Activated CD4-positive, alpha-beta T cell treated with anti-CD3 and anti-CD28 coated beads for 36 hours (primary cell): ENCODE measurements at regions of chr18 and their contacts with region 1.

Region 1: DNA sequence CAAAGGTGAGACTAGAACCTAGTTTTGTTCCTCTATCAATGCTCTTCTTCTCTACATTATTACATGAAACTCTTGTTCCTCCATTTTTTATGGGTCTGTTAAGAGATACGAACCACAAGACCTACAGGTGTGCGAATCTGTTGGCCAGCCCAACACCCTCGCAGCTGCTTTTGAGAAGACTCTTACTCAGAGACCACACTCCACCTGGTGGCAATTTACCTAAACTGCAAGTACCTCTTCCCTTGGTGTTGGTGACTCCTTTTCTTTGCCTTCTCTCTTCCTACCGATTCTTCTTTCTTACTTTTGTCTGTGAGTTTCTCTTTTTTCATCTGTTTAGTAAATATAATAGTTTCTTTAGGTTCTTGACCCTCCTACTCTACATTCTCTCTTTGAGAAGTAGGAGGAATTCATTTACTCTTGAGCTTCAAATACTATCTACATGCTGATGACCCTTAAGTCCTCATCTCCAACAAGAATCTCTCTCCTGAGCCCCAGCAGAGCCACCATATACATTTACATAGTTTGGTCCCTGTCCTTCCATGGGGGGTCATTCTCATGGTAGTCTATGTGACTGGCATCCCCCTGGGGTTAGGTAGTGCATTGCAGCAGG is 81.8 kb upstream of the GAREM1 start:
- DNase-seq: peak; percentile 71
- ATAC-seq: peak; percentile 68
- H3K4me3 Mint-ChIP-seq: no peak overlapping the region
- H3K27ac Mint-ChIP-seq: no peak overlapping the region
- H3K4me1 Mint-ChIP-seq: no peaks in the 10 kb centered on the region
- H3K27me3 Mint-ChIP-seq: peaks cover 16% of the 10 kb centered on the region

Region 2: DNA sequence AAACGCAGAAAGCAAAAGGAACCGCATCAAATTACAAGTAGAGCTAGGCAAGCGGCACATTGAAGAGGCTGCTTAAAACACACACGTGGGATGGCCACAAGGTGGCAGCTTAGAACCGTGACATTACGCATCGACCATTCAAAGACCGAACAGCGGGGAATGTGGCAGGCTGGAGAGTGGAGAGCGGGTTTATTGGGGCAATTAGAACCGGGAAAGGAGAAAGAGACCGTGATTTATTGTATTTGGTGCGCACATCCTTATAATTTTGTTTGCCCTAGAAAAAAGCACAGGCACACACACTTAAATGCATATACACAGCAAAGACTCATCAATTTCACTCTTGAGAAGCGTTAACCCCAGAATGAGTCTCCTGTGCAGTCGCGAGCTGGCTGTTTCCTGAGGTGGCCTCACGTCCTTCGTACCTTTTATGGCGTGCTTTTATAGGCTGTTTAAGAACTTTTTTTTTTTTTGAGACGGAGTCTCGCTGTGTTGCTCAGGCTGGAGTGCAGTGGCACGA is 394.4 kb before region 1 on chr18:
- CTCF ChIA-PET with region 1: interaction called, 98 read pairs
- POLR2A ChIA-PET with region 1: no interaction called
- intact Hi-C with region 1: loop called (anchors 1 kb)
- DNase-seq: peak; percentile 82
- ATAC-seq: peak; percentile 92
- H3K4me3 Mint-ChIP-seq: peak overlapping the region; percentile 54
- H3K27ac Mint-ChIP-seq: no peak overlapping the region
- H3K4me1 Mint-ChIP-seq: peaks cover 4% of the 10 kb centered on the region
- H3K27me3 Mint-ChIP-seq: peaks cover 7% of the 10 kb centered on the region

Region 3: DNA sequence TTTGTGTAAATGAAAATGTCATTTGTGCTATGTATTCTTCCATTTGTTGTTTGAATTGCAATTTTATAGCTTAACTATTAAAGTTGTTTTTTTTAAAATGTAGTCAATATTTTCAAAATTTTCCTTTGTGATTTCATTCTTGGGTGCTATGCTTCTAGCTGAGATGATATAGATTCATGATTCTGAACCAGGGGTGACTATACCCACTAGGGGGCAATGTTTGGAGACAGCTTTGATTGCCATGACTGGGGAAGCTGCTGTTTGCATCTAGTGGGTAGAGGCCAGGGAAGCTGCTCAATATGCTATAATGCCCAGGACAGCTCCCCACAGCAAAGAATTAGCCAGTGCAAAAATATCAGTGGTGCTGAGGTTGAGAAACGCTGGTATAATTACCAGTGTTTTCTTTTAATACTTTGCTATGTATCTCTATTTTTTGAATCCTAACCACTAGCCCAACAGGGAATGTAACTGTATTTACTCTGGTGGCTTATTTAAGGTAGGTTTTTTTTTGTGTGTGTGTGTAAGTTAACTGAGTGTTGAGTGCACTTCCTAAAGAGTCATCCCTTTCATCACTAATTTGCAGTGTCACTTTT is 262.9 kb before region 1 on chr18:
- CTCF ChIA-PET with region 1: interaction called, 18 read pairs
- POLR2A ChIA-PET with region 1: no interaction called
- intact Hi-C with region 1: loop called (anchors 1 to 5 kb)
- DNase-seq: peak; percentile 56
- ATAC-seq: peak; percentile 58
- H3K4me3 Mint-ChIP-seq: no peak overlapping the region
- H3K27ac Mint-ChIP-seq: no peak overlapping the region
- H3K4me1 Mint-ChIP-seq: no peaks in the 10 kb centered on the region
- H3K27me3 Mint-ChIP-seq: peaks cover 11% of the 10 kb centered on the region

Region 4: GRCh38 chr18:32439802-32440201 is 112.7 kb before region 1 on chr18:
- CTCF ChIA-PET with region 1: interaction called, 5 read pairs
- POLR2A ChIA-PET with region 1: no interaction called
- intact Hi-C with region 1: loop called in 1 of 2 experiments (anchors 1 kb)
- DNase-seq: peak; percentile 18
- ATAC-seq: no peak
- H3K4me3 Mint-ChIP-seq: no peak overlapping the region
- H3K27ac Mint-ChIP-seq: no peak overlapping the region
- H3K4me1 Mint-ChIP-seq: no peaks in the 10 kb centered on the region
- H3K27me3 Mint-ChIP-seq: peaks cover 7% of the 10 kb centered on the region

Region 5: DNA sequence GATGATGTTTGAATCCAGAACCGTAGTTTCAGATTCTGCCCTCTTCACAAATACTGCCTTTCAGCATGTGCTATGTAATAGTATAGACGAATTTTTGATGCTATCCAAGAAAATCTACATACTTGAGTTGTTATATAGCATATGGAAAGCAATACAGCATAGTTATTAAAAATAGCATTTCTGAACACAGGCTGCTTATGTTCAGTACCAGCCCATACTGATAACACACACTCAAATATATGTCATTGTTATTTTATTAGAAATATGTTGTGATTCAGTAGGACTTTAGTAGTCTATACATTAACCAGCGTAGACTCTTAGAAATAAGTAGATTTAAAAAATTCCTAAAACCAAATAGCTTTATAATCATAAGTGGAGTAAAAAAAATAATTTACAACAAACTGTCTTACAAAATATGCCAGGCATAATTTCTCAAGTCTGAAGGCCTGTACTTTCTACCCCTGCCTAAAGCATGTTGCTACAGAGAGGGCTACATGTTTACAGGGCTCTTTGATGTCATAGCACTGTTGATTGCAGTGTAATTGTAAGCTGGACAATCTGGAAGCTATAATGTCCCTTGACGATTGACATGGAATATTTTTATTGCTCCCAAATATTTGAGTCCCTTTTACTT is 1111.8 kb after region 1 on chr18:
- CTCF ChIA-PET with region 1: no interaction called
- POLR2A ChIA-PET with region 1: no interaction called
- intact Hi-C with region 1: no loop called
- DNase-seq: no peak
- ATAC-seq: no peak
- H3K4me3 Mint-ChIP-seq: no peak overlapping the region
- H3K27ac Mint-ChIP-seq: no peak overlapping the region
- H3K4me1 Mint-ChIP-seq: no peaks in the 10 kb centered on the region
- H3K27me3 Mint-ChIP-seq: no peaks in the 10 kb centered on the region